Right ventricle myocardium superior (tissue), 1 donor: ENCODE measurements at regions of chr14 and their contacts with region 1.

Region 1: DNA sequence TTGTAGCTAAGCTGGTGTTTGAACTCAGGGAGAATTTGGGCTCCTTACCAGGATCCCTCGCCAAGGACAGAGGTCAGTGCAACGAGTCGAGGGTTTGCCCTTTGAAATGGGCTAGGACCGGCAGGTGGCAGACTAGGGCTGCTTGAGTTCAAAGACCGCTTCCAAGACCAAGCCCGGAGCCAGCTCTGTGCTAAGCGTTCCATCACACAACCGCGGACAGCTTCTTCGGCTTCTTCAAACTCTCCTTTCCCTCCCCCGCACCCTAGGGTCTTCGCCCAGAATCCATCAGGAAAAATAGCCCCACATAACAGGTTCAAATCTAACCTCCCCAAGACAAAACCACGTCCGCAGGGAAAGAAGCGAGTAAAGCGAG is 705 bp upstream of the FLVCR2 start:
- DNase-seq: peak; percentile 93
- ATAC-seq: peak; percentile 91

Region 2: GRCh38 chr14:75340921-75341320 is 236.8 kb before region 1 on chr14:
- intact Hi-C with region 1: no loop called
- DNase-seq: peak; percentile 93
- ATAC-seq: peak; percentile 93

Region 3: GRCh38 chr14:75654127-75654732 is 76.5 kb after region 1 on chr14:
- intact Hi-C with region 1: loop called (anchors 1 kb)
- DNase-seq: peak; percentile 87
- ATAC-seq: peak; percentile 91